Activated CD4-positive, alpha-beta T cell treated with anti-CD3 and anti-CD28 coated beads, Interleukin-2, amount 10 ng/mL, durations not matched to agents 24 days and 14 days (primary cell): ENCODE measurements at regions of chr1 and their contacts with region 1.

Region 1: DNA sequence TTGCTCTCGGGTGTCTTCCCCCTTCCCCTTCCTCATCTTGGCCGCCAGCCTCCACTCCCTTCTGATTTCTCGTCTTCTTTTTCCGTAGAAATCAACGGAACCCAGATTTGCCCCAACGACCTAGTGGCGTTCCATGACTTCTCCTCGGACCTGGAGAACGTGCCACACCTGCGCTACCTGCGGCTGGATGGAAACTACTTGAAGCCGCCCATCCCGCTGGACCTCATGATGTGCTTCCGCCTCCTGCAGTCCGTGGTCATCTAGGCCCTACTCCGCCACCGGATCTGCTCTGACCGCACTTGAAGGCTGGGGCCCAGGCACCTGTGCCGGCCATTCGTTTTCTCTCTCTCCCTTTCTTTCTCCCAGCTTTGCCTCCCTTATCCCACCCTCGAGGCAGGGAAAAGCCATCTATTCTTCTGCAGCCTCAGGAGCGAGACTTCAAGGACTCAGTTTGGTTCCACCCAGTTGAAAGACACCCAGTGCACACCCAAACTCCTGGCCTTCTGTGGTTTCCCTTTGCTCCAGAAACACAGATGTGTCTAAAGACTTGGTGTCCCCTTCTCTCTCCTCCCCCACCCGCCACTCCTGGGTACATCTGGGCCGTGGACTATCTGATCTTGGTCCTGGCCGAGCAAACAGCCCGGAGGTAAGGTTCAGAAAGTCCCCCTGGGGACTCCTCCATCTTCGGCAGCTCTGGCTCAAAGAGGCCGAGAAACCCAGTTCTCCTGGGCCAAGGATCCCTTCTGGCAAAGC is 7.2 kb upstream of the OPTC start:
- DNase-seq: no peak
- H3K4me3 Mint-ChIP-seq: peak overlapping the region; percentile 70
- H3K27ac Mint-ChIP-seq: peak overlapping the region; percentile 50
- H3K4me1 Mint-ChIP-seq: peaks cover 3% of the 10 kb centered on the region
- H3K27me3 Mint-ChIP-seq: peaks cover 3% of the 10 kb centered on the region

Region 2: DNA sequence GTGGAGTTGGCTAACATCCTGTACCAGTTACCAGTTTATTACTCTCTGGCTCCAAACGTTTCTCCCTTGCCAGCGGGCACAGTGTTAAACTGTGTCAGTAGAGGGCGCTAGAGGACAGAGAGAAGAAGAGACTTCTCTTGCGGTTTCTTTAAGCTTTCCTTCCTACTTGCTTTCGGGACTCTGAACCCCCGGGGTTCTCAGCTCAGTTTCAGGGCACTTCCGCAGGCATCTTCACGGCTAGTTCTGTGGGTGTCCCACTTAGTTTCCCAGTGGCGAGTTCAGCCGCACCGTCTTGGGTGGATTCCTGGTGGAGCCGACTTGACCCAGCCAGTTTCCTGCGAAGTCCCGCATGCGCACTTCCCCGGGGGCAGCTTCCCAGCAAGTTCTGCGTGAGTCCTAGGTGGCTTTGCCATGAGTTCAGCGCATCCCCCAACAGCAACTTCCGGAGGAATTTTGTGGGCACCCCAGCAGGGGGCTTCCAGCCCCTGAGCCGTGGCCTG is 219.4 kb before region 1 on chr1:
- intact Hi-C with region 1: loop called (anchors 1 kb)
- DNase-seq: peak; percentile 96
- H3K4me3 Mint-ChIP-seq: peak overlapping the region; percentile 87
- H3K27ac Mint-ChIP-seq: peak overlapping the region; percentile 76
- H3K4me1 Mint-ChIP-seq: peaks cover 18% of the 10 kb centered on the region
- H3K27me3 Mint-ChIP-seq: peaks cover 4% of the 10 kb centered on the region